ENCODE measurements at regions of chr10 and their contacts with region 1.

Region 1: DNA sequence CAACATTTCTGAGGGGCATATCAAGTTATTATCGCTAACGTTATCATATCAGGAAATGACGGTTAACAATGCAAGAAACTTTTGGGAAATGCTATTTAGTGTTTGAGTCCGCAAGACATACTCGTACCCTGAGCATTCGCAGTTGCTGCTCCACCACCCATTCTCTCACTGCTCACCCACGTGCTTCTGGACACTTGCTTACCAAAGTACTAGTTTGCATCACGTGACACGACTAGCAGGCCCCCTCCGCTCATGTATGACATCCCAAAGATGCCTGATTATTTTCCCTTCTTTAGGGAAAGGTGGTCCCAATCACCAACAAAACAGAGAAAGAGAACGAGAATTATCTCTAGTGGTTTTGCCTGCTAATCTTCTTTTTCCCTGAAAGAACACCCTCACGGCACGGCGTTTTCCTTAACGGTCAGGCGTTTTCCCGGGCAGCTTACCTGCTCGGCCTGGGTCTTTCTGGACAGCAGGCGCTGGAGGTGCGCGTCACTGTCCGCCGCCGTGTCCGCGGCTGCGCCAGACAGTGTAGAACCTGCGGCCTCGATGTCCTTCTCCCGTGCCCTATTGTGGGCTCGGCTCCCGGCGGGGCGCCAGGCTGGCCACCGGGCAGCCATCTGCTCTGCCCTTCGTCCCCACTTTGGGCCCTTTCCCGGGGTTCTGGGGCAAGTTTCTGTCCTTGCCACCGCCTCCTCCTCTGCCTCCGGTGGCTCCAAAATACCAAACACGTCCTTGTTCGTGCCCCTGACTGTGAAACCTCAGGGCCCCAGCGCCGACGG is at the start of gene SUPV3L1:
- DNase-seq: peak; percentile 81
- H3K4me3 Mint-ChIP-seq: peak within 1 kb of the TSS; percentile 95
- H3K27ac Mint-ChIP-seq: peak within 1 kb of the TSS; percentile 99
- H3K4me1 Mint-ChIP-seq: peaks cover 41% of the 10 kb centered on the region
- H3K27me3 Mint-ChIP-seq: no peaks in the 10 kb centered on the region
- total RNA-seq, gene SUPV3L1: 67.5 and 69.1 TPM in 2 replicates

Region 2: GRCh38 chr10:68988530-68989316 is 191.2 kb before region 1 on chr10 and contains the start of gene KIFBP:
- intact Hi-C with region 1: loop called (anchors 1 kb)
- DNase-seq: peak; percentile 84
- H3K4me3 Mint-ChIP-seq: peak within 1 kb of the TSS; percentile 93
- H3K27ac Mint-ChIP-seq: peak within 1 kb of the TSS; percentile 87
- H3K4me1 Mint-ChIP-seq: peaks cover 34% of the 10 kb centered on the region
- H3K27me3 Mint-ChIP-seq: no peaks in the 10 kb centered on the region
- total RNA-seq, gene KIFBP: 16.4 and 16.9 TPM in 2 replicates

Region 3: GRCh38 chr10:69087590-69088470 is 92.1 kb before region 1 on chr10 and contains the start of gene SRGN:
- intact Hi-C with region 1: loop called (anchors 1 kb)
- DNase-seq: peak; percentile 81
- H3K4me3 Mint-ChIP-seq: peak within 1 kb of the TSS; percentile 92
- H3K27ac Mint-ChIP-seq: peak within 1 kb of the TSS; percentile 93
- H3K4me1 Mint-ChIP-seq: peaks cover 52% of the 10 kb centered on the region
- H3K27me3 Mint-ChIP-seq: no peaks in the 10 kb centered on the region
- total RNA-seq, gene SRGN: 1,217 and 1,242 TPM in 2 replicates

Region 4: GRCh38 chr10:69202332-69202731 is 22.4 kb after region 1 on chr10:
- intact Hi-C with region 1: loop called (anchors 1 kb)
- DNase-seq: no peak
- H3K4me3 Mint-ChIP-seq: peak overlapping the region; percentile 72
- H3K27ac Mint-ChIP-seq: peak overlapping the region; percentile 82
- H3K4me1 Mint-ChIP-seq: peaks cover 63% of the 10 kb centered on the region
- H3K27me3 Mint-ChIP-seq: no peaks in the 10 kb centered on the region

Region 5: GRCh38 chr10:69318106-69318866 is 138.4 kb after region 1 on chr10:
- intact Hi-C with region 1: loop called (anchors 2 kb)
- DNase-seq: peak; percentile 91
- H3K4me3 Mint-ChIP-seq: peak overlapping the region; percentile 99
- H3K27ac Mint-ChIP-seq: peak overlapping the region; percentile 98
- H3K4me1 Mint-ChIP-seq: peaks cover 50% of the 10 kb centered on the region
- H3K27me3 Mint-ChIP-seq: peaks cover 8% of the 10 kb centered on the region

Measured in activated T-helper 1 cell treated with anti-CD3 and anti-CD28 coated beads, Interleukin-12 subunit alpha, Interleukin-12 subunit beta, Interleukin-2, Interleukin-4 antibody, amounts not matched to agents 30 ng/mL and 10 ng/mL and 1 ng/mL, durations not matched to agents 14 hours and 24 hours and 36 hours (primary cell).